Tibial artery (tissue), 4 donors: ENCODE measurements at regions of chr18 and their contacts with region 1.

Region 1: DNA sequence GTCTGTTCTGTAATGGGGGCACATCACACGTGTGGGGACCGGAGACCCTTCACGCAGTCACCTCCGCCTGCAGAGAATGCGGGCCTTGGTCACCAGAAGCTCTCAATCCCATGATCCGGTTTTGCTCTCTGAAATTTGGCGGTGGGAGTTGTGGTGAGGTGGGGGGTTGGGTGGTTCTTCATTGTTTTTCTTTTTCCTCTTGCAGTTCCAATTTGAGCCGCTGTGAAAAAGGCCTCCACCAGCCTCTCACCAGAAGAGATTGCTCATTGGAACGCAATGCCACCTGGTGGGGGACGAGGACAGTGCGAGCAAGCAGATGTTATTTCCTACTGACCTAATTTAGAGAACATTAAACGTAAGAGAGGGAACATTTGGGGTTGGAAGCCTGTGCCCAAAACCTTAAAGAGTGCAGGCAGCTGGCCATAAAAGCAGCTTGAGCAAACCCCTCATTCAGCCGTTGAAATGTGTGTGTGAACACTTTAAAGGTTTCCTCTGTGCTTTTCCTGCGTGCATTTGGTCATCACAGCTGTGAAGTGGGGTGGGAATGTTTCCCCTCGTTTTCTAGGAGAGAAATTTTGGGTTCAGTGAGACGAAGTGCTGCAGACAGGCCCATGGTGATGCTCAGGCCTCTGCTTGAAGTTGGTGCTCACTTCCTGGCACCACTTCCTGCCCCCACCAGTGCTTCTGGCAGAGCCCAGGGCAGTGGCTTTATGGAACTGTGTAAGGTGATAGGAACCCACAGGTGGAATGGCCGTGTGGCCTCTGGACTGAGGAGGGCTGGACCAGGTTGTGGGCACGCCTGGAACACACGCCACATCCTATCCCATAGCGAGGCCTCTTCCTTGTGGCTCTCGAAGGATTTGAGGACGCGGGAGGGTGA is 61.7 kb downstream of the ZCCHC2 start:
- DNase-seq: peak; percentile 84 to 91
- H3K4me3 ChIP-seq: no peak overlapping the region
- H3K27ac ChIP-seq: no peak overlapping the region
- H3K4me1 ChIP-seq: peaks cover 0 to 19% (median 7%) of the 10 kb centered on the region in 4 donors
- H3K27me3 ChIP-seq: no peaks in the 10 kb centered on the region
- CTCF ChIP-seq: peak; percentile 96 to 99

Region 2: GRCh38 chr18:62186774-62187542 is 397.5 kb before region 1 on chr18 and contains the starts of genes PIGN and RELCH:
- intact Hi-C with region 1: loop called (anchors 10 kb)
- DNase-seq: peak; percentile 97 to 98
- H3K4me3 ChIP-seq: peak within 1 kb of the TSS; percentile 81 to 91
- H3K27ac ChIP-seq: peak within 1 kb of the TSS; percentile 83 to 89
- H3K4me1 ChIP-seq: peaks cover 0 to 48% (median 28%) of the 10 kb centered on the region in 4 donors
- H3K27me3 ChIP-seq: no peaks in the 10 kb centered on the region
- CTCF ChIP-seq: peak in 1 of 2 experiments; percentile 13

Region 3: DNA sequence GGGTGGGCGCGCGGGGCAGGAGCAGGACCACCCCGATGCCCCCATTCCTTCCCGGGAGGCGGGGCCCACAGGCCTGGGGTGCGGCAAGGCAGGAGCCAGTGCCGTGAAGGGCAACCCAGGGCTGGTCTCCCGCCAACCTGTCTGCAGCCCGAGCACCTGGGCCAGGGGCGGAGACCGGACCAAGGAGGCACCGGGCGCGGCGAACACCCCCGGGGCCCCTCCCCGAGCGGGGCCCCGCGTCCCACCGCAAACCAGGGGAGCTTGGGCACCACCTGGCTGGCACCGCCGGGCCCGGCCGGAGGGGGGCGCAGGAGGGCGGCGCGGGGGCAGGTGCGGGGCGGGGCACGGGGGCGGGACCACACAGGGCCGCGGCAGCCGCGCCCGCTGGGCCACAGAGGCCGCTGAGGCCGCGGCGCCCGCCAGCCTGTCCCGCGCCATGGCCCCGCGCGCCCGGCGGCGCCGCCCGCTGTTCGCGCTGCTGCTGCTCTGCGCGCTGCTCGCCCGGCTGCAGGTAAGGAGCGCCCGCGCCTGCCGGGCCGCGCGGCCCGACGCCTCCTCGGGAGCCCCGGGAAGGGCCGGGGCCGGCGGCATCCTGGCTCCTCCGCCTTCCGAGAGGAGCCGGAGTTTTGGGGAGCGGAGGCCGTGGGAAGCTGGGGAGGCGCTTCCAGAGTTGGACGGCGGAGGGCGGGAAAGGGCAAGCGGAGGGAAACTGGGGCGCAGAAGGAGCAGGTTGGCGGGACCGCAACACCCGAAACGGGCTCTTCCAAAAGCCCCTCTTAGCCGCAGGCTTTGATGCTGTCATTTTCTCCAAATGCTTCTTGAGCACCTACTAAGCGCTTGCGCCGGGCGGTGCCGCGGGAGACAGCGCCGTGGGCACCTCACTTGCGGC is 259.3 kb before region 1 on chr18 and contains the start of gene TNFRSF11A:
- intact Hi-C with region 1: loop called (anchors 5 kb)
- DNase-seq: no peak
- H3K4me3 ChIP-seq: peak within 1 kb of the TSS; percentile 47 to 48
- H3K27ac ChIP-seq: no peak within 1 kb of the TSS
- H3K4me1 ChIP-seq: peaks cover 0 to 40% (median 18%) of the 10 kb centered on the region in 4 donors
- H3K27me3 ChIP-seq: peaks cover 0 to 59% of the 10 kb centered on the region in 2 donors
- CTCF ChIP-seq: peak in 1 of 2 experiments; percentile 6

Region 4: GRCh38 chr18:62486304-62486964 is 98.0 kb before region 1 on chr18:
- intact Hi-C with region 1: no loop called
- DNase-seq: no peak
- H3K4me3 ChIP-seq: no peak overlapping the region
- H3K27ac ChIP-seq: no peak overlapping the region
- H3K4me1 ChIP-seq: no peaks in the 10 kb centered on the region
- H3K27me3 ChIP-seq: no peaks in the 10 kb centered on the region
- CTCF ChIP-seq: no peak

Region 5: DNA sequence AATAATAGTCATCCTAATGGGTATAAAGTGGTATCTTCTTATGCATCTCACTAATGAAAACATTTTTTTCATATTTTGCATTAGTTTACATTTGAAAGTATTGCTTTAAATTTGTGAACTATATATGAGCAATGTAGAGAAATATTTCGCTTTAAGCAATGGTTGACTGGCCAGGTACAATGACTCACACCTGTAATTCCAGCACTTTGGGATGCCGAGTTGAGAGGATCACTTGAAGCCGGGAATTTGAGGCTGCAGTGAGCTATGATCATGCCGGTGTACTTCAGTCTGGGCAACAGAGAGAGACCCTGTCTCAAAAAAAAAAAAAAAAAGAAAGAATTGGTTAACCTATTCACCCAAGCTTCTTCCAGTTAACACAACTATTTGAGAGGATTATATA is 46.5 kb before region 1 on chr18:
- intact Hi-C with region 1: loop called (anchors 10 kb)
- DNase-seq: no peak
- H3K4me3 ChIP-seq: no peak overlapping the region
- H3K27ac ChIP-seq: no peak overlapping the region
- H3K4me1 ChIP-seq: peaks cover 0 to 61% (median 16%) of the 10 kb centered on the region in 4 donors
- H3K27me3 ChIP-seq: no peaks in the 10 kb centered on the region
- CTCF ChIP-seq: no peak

Region 6: GRCh38 chr18:62982600-62983251 is 398.2 kb after region 1 on chr18:
- intact Hi-C with region 1: loop called (anchors 2 kb)
- DNase-seq: peak in 1 of 2 donors; percentile 65
- H3K4me3 ChIP-seq: peak overlapping the region; percentile 36 to 39
- H3K27ac ChIP-seq: no peak overlapping the region
- H3K4me1 ChIP-seq: peaks cover 0 to 6% (median 4%) of the 10 kb centered on the region in 4 donors
- H3K27me3 ChIP-seq: no peaks in the 10 kb centered on the region
- CTCF ChIP-seq: peak; percentile 71 to 83